Right lobe of liver (tissue), 6 donors: ENCODE measurements at regions of chr14 and their contacts with region 1.

Region 1: DNA sequence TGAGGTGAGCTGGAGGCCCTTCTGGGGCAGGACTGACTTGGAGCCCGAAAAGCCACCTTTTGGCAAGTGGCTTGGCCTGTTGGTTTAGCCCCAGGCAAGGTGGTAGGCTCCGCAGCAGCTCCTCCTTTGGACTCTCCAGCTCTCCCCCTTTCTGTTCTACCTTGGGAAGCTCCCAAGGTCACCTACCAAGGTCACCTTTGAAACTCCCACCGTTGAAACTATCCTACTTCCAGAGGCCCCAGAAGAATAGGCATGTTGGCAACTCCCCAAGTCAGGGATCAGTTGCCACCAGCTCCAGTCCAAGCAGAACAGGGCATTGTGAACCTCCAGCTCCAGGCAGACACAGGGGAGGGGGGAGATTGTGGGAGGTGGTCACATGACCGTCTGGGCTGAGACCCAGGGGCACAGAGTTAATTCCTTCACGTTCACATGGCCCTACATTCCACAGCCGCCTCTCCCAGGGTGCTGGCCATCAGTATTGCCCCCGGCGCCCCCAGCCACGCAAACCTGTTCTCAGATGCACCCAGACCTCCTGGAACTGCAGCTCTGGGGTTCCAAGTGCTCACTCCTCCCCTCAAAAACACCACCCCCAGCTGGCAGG is 14.4 kb downstream of the IRF2BPL start:
- DNase-seq: peak in 2 of 3 donors; percentile 73
- ATAC-seq: peak; percentile 64 to 84 (median 72)
- H3K4me3 ChIP-seq: no peak overlapping the region
- H3K27ac ChIP-seq: peak overlapping the region in 1 of 3 donors; percentile 13
- H3K4me1 ChIP-seq: peaks cover 0 to 15% (median 2%) of the 10 kb centered on the region in 4 donors
- H3K27me3 ChIP-seq: no peaks in the 10 kb centered on the region
- CTCF ChIP-seq: no peak
- POLR2A ChIP-seq: no peak

Region 2: GRCh38 chr14:76968621-76969063 is 45.5 kb before region 1 on chr14:
- intact Hi-C with region 1: loop called in 1 of 2 experiments (anchors 10 kb)
- DNase-seq: peak in 1 of 3 donors; percentile 43
- ATAC-seq: peak; percentile 76 to 84 (median 79)
- H3K4me3 ChIP-seq: no peak overlapping the region
- H3K27ac ChIP-seq: no peak overlapping the region
- H3K4me1 ChIP-seq: peaks cover 0 to 6% (median 0%) of the 10 kb centered on the region in 4 donors
- H3K27me3 ChIP-seq: no peaks in the 10 kb centered on the region
- CTCF ChIP-seq: peak in 1 of 4 donors; percentile 20
- POLR2A ChIP-seq: no peak

Region 3: DNA sequence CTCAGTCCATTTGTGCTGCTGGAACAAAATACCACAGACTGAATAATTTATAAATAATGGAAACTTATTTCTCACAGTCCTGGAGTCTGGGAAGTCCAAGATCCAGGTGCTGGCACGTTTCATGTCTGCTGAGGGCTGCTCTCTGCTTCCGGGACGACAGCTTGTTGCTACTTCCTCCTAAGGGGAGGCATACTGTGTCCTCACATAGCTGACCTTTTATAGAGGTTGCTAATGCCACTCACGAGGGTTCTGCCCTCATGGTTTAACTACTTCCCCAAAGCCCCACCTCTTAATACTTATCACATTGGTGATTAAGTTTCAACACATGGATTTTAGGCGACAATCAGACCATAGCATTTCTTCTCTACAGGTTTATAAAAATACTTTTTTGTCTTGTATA is 1567.1 kb after region 1 on chr14:
- intact Hi-C with region 1: no loop called
- DNase-seq: no peak
- ATAC-seq: no peak
- H3K4me3 ChIP-seq: no peak overlapping the region
- H3K27ac ChIP-seq: no peak overlapping the region
- H3K4me1 ChIP-seq: no peaks in the 10 kb centered on the region
- H3K27me3 ChIP-seq: no peaks in the 10 kb centered on the region
- CTCF ChIP-seq: no peak
- POLR2A ChIP-seq: no peak